CD8-positive, alpha-beta memory T cell (primary cell): ENCODE measurements at regions of chr2 and their contacts with region 1.

Region 1: DNA sequence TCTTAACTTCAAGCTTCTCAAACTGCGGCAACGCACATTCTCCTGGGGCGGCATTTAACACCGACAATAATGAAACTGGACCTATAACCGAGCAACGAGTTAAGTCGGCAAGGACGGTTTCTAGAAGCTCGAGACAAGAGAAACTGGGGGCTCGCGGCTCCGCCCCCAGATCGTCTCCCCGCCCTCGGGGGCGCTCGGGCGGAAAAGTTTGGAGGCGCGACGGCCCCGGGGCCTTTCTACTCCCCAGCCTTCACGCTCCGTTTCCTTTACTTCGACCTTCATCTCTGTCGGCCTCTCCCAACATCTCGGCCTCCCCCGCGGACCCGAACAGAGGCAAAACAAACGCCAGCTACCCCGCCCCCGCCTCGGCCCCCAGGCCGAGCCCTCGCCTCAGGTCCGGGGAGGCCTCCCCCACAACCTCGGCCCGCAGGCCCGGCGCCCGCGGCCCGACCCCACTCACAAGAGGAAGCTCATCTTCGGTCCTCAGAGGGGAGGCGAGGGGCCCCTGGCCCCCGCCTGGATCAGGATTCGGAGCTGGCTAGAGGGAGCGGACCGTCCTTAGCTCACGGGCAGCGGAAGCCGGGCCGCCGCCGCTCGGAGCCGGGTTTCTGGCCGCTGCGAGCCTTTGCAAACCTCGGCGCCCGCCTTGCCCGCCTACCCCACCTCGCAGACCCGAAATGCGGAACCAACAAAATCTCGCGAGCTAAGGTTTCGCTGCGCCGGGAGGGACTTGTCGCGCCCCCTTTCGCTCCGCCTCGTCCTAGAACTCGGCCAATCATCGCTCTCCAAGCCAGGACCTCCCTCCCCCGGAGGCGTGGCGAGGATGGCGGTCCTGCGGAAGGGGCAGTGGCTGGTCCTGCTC is at the start of gene MOB1A:
- DNase-seq: peak; percentile 97 to 98 (median 98)
- H3K4me3 ChIP-seq: peak within 1 kb of the TSS; percentile 88
- H3K4me3 Mint-ChIP-seq: peak within 1 kb of the TSS; percentile 89 to 99 (median 93)
- H3K27ac ChIP-seq: peak within 1 kb of the TSS; percentile 91
- H3K27ac Mint-ChIP-seq: peak within 1 kb of the TSS; percentile 94 to 99 (median 95)
- H3K4me1 ChIP-seq: peaks cover 37% of the 10 kb centered on the region
- H3K4me1 Mint-ChIP-seq: peaks cover 28 to 47% (median 46%) of the 10 kb centered on the region in 3 donors
- H3K27me3 ChIP-seq: no peaks in the 10 kb centered on the region
- H3K27me3 Mint-ChIP-seq: no peaks in the 10 kb centered on the region
- total RNA-seq, gene MOB1A: 177 to 185 TPM

Region 2: GRCh38 chr2:73926493-73927338 is 251.7 kb before region 1 on chr2 and contains the start of gene DGUOK:
- CTCF ChIA-PET with region 1: interaction called, 3 read pairs
- POLR2A ChIA-PET with region 1: interaction called, 10 read pairs
- DNase-seq: peak; percentile 92 to 99 (median 97)
- H3K4me3 ChIP-seq: peak within 1 kb of the TSS; percentile 82
- H3K4me3 Mint-ChIP-seq: peak within 1 kb of the TSS; percentile 81 to 96 (median 93)
- H3K27ac ChIP-seq: peak within 1 kb of the TSS; percentile 99
- H3K27ac Mint-ChIP-seq: peak within 1 kb of the TSS; percentile 97 to 99 (median 99)
- H3K4me1 ChIP-seq: peaks cover 46% of the 10 kb centered on the region
- H3K4me1 Mint-ChIP-seq: peaks cover 48 to 57% (median 55%) of the 10 kb centered on the region in 3 donors
- H3K27me3 ChIP-seq: no peaks in the 10 kb centered on the region
- H3K27me3 Mint-ChIP-seq: no peaks in the 10 kb centered on the region
- total RNA-seq, gene DGUOK: 96.6 to 98.8 TPM

Region 3: GRCh38 chr2:74010087-74010661 is 168.3 kb before region 1 on chr2:
- CTCF ChIA-PET with region 1: no interaction called
- POLR2A ChIA-PET with region 1: no interaction called
- DNase-seq: no peak
- H3K4me3 ChIP-seq: no peak overlapping the region
- H3K4me3 Mint-ChIP-seq: no peak overlapping the region
- H3K27ac ChIP-seq: no peak overlapping the region
- H3K27ac Mint-ChIP-seq: peak overlapping the region in 1 of 8 donors; percentile 29
- H3K4me1 ChIP-seq: no peaks in the 10 kb centered on the region
- H3K4me1 Mint-ChIP-seq: peaks cover 15 to 30% (median 23%) of the 10 kb centered on the region in 3 donors
- H3K27me3 ChIP-seq: no peaks in the 10 kb centered on the region
- H3K27me3 Mint-ChIP-seq: no peaks in the 10 kb centered on the region

Region 4: GRCh38 chr2:74119912-74120825 is 58.3 kb before region 1 on chr2:
- CTCF ChIA-PET with region 1: no interaction called
- POLR2A ChIA-PET with region 1: interaction called, 22 read pairs
- DNase-seq: peak; percentile 69 to 87 (median 78)
- H3K4me3 ChIP-seq: peak overlapping the region; percentile 75
- H3K4me3 Mint-ChIP-seq: peak overlapping the region; percentile 84 to 95 (median 89)
- H3K27ac ChIP-seq: peak overlapping the region; percentile 76
- H3K27ac Mint-ChIP-seq: peak overlapping the region; percentile 66 to 97 (median 92)
- H3K4me1 ChIP-seq: peaks cover 7% of the 10 kb centered on the region
- H3K4me1 Mint-ChIP-seq: peaks cover 9 to 13% (median 12%) of the 10 kb centered on the region in 3 donors
- H3K27me3 ChIP-seq: no peaks in the 10 kb centered on the region
- H3K27me3 Mint-ChIP-seq: peaks cover 2 to 5% of the 10 kb centered on the region in 2 donors

Region 5: GRCh38 chr2:74147727-74148456 is 30.5 kb before region 1 on chr2 and contains the start of gene BOLA3:
- CTCF ChIA-PET with region 1: interaction called, 18 read pairs
- POLR2A ChIA-PET with region 1: interaction called, 13 read pairs
- DNase-seq: peak; percentile 73 to 82 (median 78)
- H3K4me3 ChIP-seq: peak within 1 kb of the TSS; percentile 82
- H3K4me3 Mint-ChIP-seq: no peak within 1 kb of the TSS
- H3K27ac ChIP-seq: peak within 1 kb of the TSS; percentile 55
- H3K27ac Mint-ChIP-seq: peak within 1 kb of the TSS in 1 of 8 donors; percentile 26
- H3K4me1 ChIP-seq: peaks cover 12% of the 10 kb centered on the region
- H3K4me1 Mint-ChIP-seq: peaks cover 5 to 9% (median 6%) of the 10 kb centered on the region in 3 donors
- H3K27me3 ChIP-seq: no peaks in the 10 kb centered on the region
- H3K27me3 Mint-ChIP-seq: no peaks in the 10 kb centered on the region
- total RNA-seq, gene BOLA3: 131 to 133 TPM

Region 6: GRCh38 chr2:74188696-74189095 is 10.3 kb after region 1 on chr2:
- CTCF ChIA-PET with region 1: interaction called, 12 read pairs
- POLR2A ChIA-PET with region 1: interaction called, 3 read pairs
- DNase-seq: no peak
- H3K4me3 ChIP-seq: no peak overlapping the region
- H3K4me3 Mint-ChIP-seq: no peak overlapping the region
- H3K27ac ChIP-seq: no peak overlapping the region
- H3K27ac Mint-ChIP-seq: no peak overlapping the region
- H3K4me1 ChIP-seq: no peaks in the 10 kb centered on the region
- H3K4me1 Mint-ChIP-seq: peaks cover 3 to 11% (median 7%) of the 10 kb centered on the region in 3 donors
- H3K27me3 ChIP-seq: no peaks in the 10 kb centered on the region
- H3K27me3 Mint-ChIP-seq: peaks cover 2 to 3% of the 10 kb centered on the region in 2 donors

Region 7: DNA sequence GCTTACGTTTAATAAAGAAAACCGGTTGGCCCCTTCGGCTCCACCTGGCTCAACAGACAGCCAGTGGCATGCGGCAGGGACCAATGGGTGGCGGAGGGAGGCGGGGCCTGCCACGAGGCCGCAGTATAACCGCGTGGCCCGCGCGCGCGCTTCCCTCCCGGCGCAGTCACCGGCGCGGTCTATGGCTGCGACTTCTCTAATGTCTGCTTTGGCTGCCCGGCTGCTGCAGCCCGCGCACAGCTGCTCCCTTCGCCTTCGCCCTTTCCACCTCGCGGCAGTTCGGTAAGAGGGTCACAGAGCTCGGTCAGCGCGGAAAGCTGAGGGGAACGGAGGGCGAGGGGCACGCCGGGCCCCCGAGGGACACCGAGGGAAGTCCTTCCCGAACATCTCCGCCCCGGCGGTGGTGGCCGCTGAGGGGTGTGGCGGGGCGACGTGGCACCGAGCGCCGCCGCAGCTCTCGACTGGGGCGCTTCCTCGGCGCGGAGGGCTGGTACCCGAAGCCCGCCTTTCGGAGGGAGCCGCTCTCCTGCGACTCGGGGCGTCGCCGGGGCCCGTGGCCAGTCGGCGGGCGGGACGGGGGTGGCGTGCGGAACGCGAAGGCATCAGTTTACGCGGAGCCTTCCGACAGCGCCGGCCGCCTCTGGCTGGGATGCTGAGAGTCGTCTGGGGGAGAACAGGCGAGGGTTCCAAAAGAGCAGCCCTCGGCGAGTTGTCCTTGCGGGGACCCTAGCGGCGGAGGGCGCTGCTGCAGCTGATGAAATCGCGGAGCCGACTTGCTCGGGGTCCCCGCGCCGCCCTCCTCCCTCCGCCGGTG is 20.2 kb after region 1 on chr2 and contains the start of gene MTHFD2:
- CTCF ChIA-PET with region 1: interaction called, 59 read pairs
- POLR2A ChIA-PET with region 1: interaction called, 84 read pairs
- DNase-seq: peak; percentile 82 to 91 (median 84)
- H3K4me3 ChIP-seq: peak within 1 kb of the TSS; percentile 97
- H3K4me3 Mint-ChIP-seq: peak within 1 kb of the TSS; percentile 90 to 100 (median 95)
- H3K27ac ChIP-seq: peak within 1 kb of the TSS; percentile 84
- H3K27ac Mint-ChIP-seq: peak within 1 kb of the TSS; percentile 85 to 100 (median 98)
- H3K4me1 ChIP-seq: peaks cover 23% of the 10 kb centered on the region
- H3K4me1 Mint-ChIP-seq: peaks cover 23 to 44% (median 40%) of the 10 kb centered on the region in 3 donors
- H3K27me3 ChIP-seq: no peaks in the 10 kb centered on the region
- H3K27me3 Mint-ChIP-seq: no peaks in the 10 kb centered on the region
- total RNA-seq, gene MTHFD2: 379 to 397 TPM

Region 8: DNA sequence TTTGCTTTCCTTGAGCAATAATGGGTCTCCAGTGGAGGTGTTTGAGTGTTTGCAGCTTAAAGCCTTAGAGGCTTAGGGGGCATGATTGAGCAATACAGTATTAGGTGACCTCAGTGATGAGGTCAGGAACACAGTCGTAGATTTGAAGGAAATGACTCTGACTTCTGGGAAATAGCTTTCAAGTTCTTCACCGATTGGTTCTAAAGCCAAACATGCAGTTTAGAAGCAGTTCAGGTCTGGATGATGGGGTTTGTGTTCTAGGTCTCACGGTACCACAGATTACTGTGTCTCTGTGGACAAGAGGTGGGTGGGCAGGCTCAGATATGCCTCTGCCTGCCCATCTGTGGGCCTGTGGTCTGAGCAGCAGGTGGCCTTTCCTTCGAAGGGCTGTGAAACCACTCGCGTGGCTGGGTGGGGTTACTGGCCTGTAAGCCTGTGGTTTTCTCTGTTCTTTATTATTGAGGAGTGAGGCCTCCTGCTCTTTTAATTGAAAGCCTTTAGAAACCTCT is 27.8 kb after region 1 on chr2:
- CTCF ChIA-PET with region 1: interaction called, 13 read pairs
- POLR2A ChIA-PET with region 1: interaction called, 11 read pairs
- DNase-seq: peak in 3 of 5 donors; percentile 19 to 58 (median 42)
- H3K4me3 ChIP-seq: peak overlapping the region; percentile 6
- H3K4me3 Mint-ChIP-seq: peak overlapping the region; percentile 66 to 81 (median 76)
- H3K27ac ChIP-seq: peak overlapping the region; percentile 68
- H3K27ac Mint-ChIP-seq: peak overlapping the region; percentile 92 to 98 (median 97)
- H3K4me1 ChIP-seq: peaks cover 24% of the 10 kb centered on the region
- H3K4me1 Mint-ChIP-seq: peaks cover 27 to 62% (median 48%) of the 10 kb centered on the region in 3 donors
- H3K27me3 ChIP-seq: no peaks in the 10 kb centered on the region
- H3K27me3 Mint-ChIP-seq: no peaks in the 10 kb centered on the region